Activated CD4-positive, alpha-beta memory T cell treated with anti-CD3 and anti-CD28 coated beads for 36 hours (primary cell): ENCODE measurements at regions of chr17 and their contacts with region 1.

Region 1: DNA sequence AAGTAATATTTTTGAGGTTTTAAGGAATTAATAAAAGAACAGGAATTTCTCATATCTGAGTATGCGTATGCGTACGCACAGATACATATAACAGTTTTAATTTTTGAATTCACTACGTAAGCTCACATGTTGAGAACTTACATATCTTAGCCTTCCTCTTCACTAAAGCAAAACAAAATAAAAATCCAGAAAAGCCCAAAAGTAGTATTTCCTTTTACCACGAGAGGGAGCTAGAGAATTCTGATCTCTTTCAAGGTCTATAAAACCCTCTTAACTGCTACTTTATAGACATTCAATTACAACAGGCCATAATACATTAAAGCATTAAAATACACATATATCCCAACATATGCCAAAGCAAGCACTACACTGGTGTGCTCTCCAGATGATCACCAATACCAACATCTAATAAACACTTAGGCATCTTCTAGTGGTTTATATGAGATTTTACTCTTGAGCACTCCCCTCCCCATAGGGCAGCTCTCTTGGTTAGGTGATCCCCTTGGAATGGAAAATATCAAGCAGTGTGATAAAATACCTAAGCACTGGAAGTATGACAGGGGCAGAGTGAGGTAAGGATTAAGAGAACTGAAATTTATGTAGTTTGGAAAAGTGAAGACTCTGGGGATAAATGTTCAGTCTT is 94.0 kb downstream of the SKAP1 start:
- DNase-seq: no peak
- H3K4me3 Mint-ChIP-seq: no peak overlapping the region
- H3K27ac Mint-ChIP-seq: no peak overlapping the region
- H3K4me1 Mint-ChIP-seq: peaks cover 8% of the 10 kb centered on the region
- H3K27me3 Mint-ChIP-seq: no peaks in the 10 kb centered on the region

Region 2: GRCh38 chr17:47987240-47987835 is 348.6 kb before region 1 on chr17:
- CTCF ChIA-PET with region 1: no interaction called
- POLR2A ChIA-PET with region 1: no interaction called
- intact Hi-C with region 1: no loop called
- DNase-seq: no peak
- H3K4me3 Mint-ChIP-seq: no peak overlapping the region
- H3K27ac Mint-ChIP-seq: no peak overlapping the region
- H3K4me1 Mint-ChIP-seq: peaks cover 2% of the 10 kb centered on the region
- H3K27me3 Mint-ChIP-seq: peaks cover under 1% of the 10 kb centered on the region

Region 3: DNA sequence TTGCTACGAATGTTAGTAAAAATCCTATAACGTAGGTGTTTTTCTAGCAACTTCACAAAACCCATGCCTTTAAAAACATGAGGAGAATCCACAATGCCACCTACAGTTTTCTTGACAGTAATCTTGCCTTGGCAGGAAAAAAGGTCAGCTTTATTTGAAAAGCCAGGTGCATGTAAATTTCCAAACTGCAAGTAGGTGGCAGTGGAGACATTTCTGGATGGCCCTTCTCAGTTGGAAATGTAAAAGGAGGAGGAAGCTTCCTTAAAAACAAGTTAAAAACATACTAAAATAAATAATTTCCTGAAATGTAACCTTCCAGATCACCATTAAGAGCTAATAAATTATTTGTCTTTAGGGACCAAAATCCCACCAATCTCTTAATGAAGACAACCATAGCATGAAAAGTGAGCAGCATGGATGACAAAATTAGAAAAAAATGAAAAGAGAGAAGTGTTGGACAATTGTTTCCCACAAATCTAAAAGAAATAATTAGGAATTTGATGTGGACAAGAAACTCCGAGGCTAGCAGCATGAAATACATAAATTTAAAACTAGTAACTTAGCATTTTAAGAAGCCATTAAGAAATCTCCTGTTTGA is 76.2 kb before region 1 on chr17:
- CTCF ChIA-PET with region 1: interaction called, 15 read pairs
- POLR2A ChIA-PET with region 1: no interaction called
- intact Hi-C with region 1: no loop called
- DNase-seq: no peak
- H3K4me3 Mint-ChIP-seq: no peak overlapping the region
- H3K27ac Mint-ChIP-seq: no peak overlapping the region
- H3K4me1 Mint-ChIP-seq: peaks cover 13% of the 10 kb centered on the region
- H3K27me3 Mint-ChIP-seq: no peaks in the 10 kb centered on the region

Region 4: GRCh38 chr17:48295362-48296288 is 40.4 kb before region 1 on chr17:
- CTCF ChIA-PET with region 1: interaction called, 6 read pairs
- POLR2A ChIA-PET with region 1: no interaction called
- intact Hi-C with region 1: loop called (anchors 2 kb)
- DNase-seq: no peak
- H3K4me3 Mint-ChIP-seq: peak overlapping the region; percentile 59
- H3K27ac Mint-ChIP-seq: peak overlapping the region; percentile 92
- H3K4me1 Mint-ChIP-seq: peaks cover 66% of the 10 kb centered on the region
- H3K27me3 Mint-ChIP-seq: no peaks in the 10 kb centered on the region

Region 5: GRCh38 chr17:48307814-48308411 is 28.1 kb before region 1 on chr17:
- CTCF ChIA-PET with region 1: interaction called, 14 read pairs
- POLR2A ChIA-PET with region 1: no interaction called
- intact Hi-C with region 1: no loop called
- DNase-seq: peak; percentile 66
- H3K4me3 Mint-ChIP-seq: no peak overlapping the region
- H3K27ac Mint-ChIP-seq: no peak overlapping the region
- H3K4me1 Mint-ChIP-seq: peaks cover 11% of the 10 kb centered on the region
- H3K27me3 Mint-ChIP-seq: no peaks in the 10 kb centered on the region

Region 6: GRCh38 chr17:48351831-48352332 is 15.9 kb after region 1 on chr17:
- CTCF ChIA-PET with region 1: interaction called, 39 read pairs
- POLR2A ChIA-PET with region 1: no interaction called
- intact Hi-C with region 1: no loop called
- DNase-seq: no peak
- H3K4me3 Mint-ChIP-seq: no peak overlapping the region
- H3K27ac Mint-ChIP-seq: no peak overlapping the region
- H3K4me1 Mint-ChIP-seq: peaks cover 6% of the 10 kb centered on the region
- H3K27me3 Mint-ChIP-seq: no peaks in the 10 kb centered on the region

Region 7: DNA sequence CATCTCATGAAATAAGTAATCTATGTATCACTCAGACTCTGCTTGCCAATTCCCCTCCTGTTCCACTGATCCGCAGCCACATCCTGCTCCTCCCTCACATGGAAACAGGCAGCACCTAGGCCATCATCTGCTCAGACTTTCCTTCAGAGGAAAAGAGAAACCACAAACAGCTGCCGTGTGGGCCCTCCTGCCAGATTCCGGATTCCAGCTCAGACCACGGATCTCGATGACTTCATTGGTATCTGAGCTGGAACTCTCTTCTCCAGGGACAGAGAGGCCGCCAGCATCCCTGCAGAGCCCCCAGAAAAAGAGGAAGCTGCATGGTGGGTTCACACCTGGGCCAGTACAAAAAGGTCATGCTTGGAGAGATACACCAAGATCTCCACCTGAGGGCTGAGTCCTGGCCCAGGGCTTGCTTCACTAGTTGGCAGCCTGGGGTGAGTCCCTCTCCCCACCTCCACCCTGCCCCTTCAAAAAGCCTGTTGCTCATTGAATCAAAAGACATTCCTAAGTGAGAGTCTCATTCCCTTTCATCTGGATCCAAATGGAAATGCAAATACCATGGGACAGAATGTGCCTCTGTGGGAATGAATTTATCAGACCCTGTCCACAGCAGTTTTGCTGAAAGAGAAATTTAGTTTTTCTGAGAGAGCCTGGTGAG is 147.6 kb after region 1 on chr17:
- CTCF ChIA-PET with region 1: interaction called, 5 read pairs
- POLR2A ChIA-PET with region 1: no interaction called
- intact Hi-C with region 1: loop called (anchors 10 kb)
- DNase-seq: peak; percentile 67
- H3K4me3 Mint-ChIP-seq: no peak overlapping the region
- H3K27ac Mint-ChIP-seq: peak overlapping the region; percentile 30
- H3K4me1 Mint-ChIP-seq: peaks cover 22% of the 10 kb centered on the region
- H3K27me3 Mint-ChIP-seq: peaks cover 6% of the 10 kb centered on the region